ENCODE measurements at regions of chr1 and their contacts with region 1.

Region 1: GRCh38 chr1:41416552-41417334 is 55.5 kb downstream of the FOXO6 start:
- DNase-seq: peak; percentile 76

Region 2: GRCh38 chr1:41013796-41014195 is 402.9 kb before region 1 on chr1:
- in situ Hi-C with region 1: no loop called
- DNase-seq: no peak

Region 3: DNA sequence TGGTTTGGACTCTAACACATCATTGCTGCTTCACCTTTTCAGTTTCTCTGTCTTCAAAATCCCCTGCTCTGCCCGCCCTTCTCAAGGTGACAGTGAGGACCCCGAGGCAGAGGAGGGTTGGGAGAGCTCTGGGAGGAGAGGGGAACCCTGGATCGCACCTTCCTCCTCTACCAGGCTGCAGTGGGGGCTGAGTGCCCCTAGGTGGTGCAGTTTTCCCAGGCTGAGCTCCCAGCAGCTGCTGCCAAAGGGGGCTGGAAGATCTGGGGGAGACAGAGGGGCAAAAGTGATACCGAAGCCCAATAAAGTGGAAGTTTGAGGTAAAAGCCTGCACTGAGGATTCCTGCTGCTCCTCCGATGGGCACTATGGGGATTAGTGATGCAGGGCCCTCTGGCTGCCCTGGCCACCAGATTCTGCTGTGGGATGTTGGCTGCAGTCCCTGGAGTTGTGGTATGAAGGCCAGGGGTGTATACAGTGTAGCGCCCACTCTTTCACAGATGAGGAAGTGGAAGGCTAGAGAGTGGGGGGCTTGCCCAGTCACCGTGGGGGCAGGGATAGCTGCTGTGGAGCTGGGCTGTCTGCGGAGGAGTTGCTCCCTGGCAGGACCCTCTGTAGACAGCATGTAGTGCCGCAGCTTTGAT is 133.9 kb before region 1 on chr1:
- in situ Hi-C with region 1: loop called (anchors 25 kb)
- DNase-seq: peak; percentile 23

Region 4: GRCh38 chr1:41322835-41323627 is 93.7 kb before region 1 on chr1:
- in situ Hi-C with region 1: no loop called
- DNase-seq: peak; percentile 67

Measured in ACHN (cell line).